Breast epithelium (tissue), 4 donors: ENCODE measurements at regions of chr17 and their contacts with region 1.

Region 1: GRCh38 chr17:29909236-29910003 is 20.6 kb downstream of the SSH2 start:
- DNase-seq: no peak
- H3K4me3 ChIP-seq: no peak overlapping the region
- H3K27ac ChIP-seq: no peak overlapping the region
- H3K4me1 ChIP-seq: no peaks in the 10 kb centered on the region
- H3K27me3 ChIP-seq: no peaks in the 10 kb centered on the region
- CTCF ChIP-seq: no peak
- POLR2A ChIP-seq: no peak

Region 2: GRCh38 chr17:30021708-30022317 is 112.4 kb after region 1 on chr17:
- intact Hi-C with region 1: loop called (anchors 5 kb)
- DNase-seq: no peak
- H3K4me3 ChIP-seq: no peak overlapping the region
- H3K27ac ChIP-seq: no peak overlapping the region
- H3K4me1 ChIP-seq: no peaks in the 10 kb centered on the region
- H3K27me3 ChIP-seq: no peaks in the 10 kb centered on the region
- CTCF ChIP-seq: peak; percentile 60 to 74 (median 73)
- POLR2A ChIP-seq: no peak